ENCODE measurements at regions of chr12 and their contacts with region 1.

Region 1: DNA sequence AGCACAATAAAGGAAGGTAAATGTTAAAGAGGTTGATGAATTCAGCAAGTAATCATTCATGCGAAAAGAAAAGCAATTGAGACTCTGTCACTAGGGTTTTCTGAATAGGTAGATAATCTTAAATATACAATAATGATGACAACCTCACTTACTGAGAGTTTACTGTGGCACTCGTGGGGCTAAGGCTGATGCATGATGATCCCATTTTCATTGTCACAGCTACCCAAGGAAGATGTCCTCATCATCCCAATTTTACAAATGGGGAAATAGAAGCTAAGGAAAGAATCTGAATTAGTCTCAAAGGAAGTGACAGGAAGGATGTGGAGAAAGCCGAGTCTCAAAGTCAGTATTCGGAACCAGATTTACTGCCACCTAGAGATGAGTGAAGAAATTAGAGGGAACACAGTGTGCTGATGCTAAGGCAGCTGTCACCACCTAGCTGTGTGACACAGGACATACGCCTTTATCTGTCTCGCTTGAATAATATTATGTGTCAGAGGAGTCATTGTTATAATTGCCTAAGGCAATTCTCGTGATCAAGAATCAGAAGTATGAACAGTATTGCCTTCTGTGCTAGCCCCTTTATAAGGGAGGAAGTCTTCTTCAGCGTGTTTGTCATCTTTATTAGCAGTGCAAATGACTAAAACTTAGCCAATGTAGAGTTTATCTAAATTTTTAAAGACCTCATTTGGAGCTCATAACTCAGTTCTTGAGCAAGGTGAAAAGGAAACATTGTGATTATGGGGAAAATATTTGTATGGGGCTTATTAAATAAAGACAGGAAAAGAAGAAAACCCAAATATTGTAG is 63.2 kb downstream of the ERGIC2 start:
- DNase-seq: peak; percentile 58
- H3K4me3 Mint-ChIP-seq: no peak overlapping the region
- H3K27ac Mint-ChIP-seq: no peak overlapping the region
- H3K4me1 Mint-ChIP-seq: peaks cover 8% of the 10 kb centered on the region
- H3K27me3 Mint-ChIP-seq: no peaks in the 10 kb centered on the region

Region 2: GRCh38 chr12:29073628-29074239 is 244.0 kb before region 1 on chr12:
- CTCF ChIA-PET with region 1: interaction called, 93 read pairs
- DNase-seq: no peak
- H3K4me3 Mint-ChIP-seq: no peak overlapping the region
- H3K27ac Mint-ChIP-seq: no peak overlapping the region
- H3K4me1 Mint-ChIP-seq: no peaks in the 10 kb centered on the region
- H3K27me3 Mint-ChIP-seq: peaks cover 17% of the 10 kb centered on the region

Region 3: DNA sequence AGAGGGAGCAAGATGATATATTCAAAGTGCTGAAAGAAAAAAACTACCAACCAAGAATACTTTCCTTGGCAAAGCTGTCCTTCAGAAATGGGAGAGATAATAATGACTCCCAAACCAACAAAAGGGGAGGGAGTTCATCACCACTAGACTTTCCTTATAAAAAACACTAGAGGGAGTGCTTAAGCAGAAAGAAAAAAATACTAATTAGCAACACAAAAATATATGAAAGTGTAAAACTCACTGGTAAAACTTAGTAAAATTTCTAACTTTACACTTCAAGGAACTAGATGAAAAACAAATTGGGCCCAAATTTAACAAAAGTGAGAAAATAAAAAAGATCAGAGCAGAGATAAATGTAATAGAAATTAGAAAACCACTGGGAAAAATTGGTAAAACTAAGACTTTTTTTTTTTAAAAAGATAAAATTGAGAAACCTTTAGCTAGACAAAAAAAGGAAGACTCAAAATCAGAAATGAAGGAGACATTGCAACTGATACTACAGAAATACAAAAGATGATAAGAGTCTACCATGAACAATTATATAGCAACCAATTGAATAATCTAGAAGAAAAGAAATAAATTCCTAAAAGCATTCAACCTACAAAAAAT is 229.0 kb before region 1 on chr12:
- CTCF ChIA-PET with region 1: interaction called, 75 read pairs
- DNase-seq: no peak
- H3K4me3 Mint-ChIP-seq: no peak overlapping the region
- H3K27ac Mint-ChIP-seq: no peak overlapping the region
- H3K4me1 Mint-ChIP-seq: peaks cover 2% of the 10 kb centered on the region
- H3K27me3 Mint-ChIP-seq: peaks cover 35% of the 10 kb centered on the region

Region 4: GRCh38 chr12:29110506-29111442 is 207.0 kb before region 1 on chr12:
- CTCF ChIA-PET with region 1: no interaction called
- DNase-seq: no peak
- H3K4me3 Mint-ChIP-seq: no peak overlapping the region
- H3K27ac Mint-ChIP-seq: no peak overlapping the region
- H3K4me1 Mint-ChIP-seq: peaks cover 5% of the 10 kb centered on the region
- H3K27me3 Mint-ChIP-seq: peaks cover 12% of the 10 kb centered on the region

Region 5: GRCh38 chr12:29306682-29307081 is 11.1 kb before region 1 on chr12:
- CTCF ChIA-PET with region 1: interaction called, 27 read pairs
- DNase-seq: no peak
- H3K4me3 Mint-ChIP-seq: no peak overlapping the region
- H3K27ac Mint-ChIP-seq: no peak overlapping the region
- H3K4me1 Mint-ChIP-seq: no peaks in the 10 kb centered on the region
- H3K27me3 Mint-ChIP-seq: no peaks in the 10 kb centered on the region

Region 6: DNA sequence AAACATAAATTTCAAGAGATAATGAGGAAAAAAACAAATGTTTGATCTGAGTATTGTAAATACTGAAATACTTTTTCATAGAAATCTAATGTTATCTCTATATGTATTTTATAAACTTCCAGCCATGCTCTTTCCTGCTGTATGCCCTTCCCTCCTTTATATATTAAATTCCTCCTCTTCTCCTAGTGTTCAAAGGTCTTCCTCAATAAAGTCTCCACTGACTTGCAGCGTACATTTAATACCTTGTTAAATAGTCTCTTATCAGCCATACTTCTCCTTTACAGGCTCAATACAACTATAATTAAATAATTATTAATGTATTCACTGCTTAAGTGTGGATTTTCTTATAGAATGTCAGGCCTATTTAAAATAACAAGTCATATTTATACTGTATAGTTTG is 37.2 kb after region 1 on chr12:
- CTCF ChIA-PET with region 1: no interaction called
- DNase-seq: no peak
- H3K4me3 Mint-ChIP-seq: no peak overlapping the region
- H3K27ac Mint-ChIP-seq: no peak overlapping the region
- H3K4me1 Mint-ChIP-seq: no peaks in the 10 kb centered on the region
- H3K27me3 Mint-ChIP-seq: no peaks in the 10 kb centered on the region